ENCODE measurements at regions of chr2 and their contacts with region 1.

Region 1: DNA sequence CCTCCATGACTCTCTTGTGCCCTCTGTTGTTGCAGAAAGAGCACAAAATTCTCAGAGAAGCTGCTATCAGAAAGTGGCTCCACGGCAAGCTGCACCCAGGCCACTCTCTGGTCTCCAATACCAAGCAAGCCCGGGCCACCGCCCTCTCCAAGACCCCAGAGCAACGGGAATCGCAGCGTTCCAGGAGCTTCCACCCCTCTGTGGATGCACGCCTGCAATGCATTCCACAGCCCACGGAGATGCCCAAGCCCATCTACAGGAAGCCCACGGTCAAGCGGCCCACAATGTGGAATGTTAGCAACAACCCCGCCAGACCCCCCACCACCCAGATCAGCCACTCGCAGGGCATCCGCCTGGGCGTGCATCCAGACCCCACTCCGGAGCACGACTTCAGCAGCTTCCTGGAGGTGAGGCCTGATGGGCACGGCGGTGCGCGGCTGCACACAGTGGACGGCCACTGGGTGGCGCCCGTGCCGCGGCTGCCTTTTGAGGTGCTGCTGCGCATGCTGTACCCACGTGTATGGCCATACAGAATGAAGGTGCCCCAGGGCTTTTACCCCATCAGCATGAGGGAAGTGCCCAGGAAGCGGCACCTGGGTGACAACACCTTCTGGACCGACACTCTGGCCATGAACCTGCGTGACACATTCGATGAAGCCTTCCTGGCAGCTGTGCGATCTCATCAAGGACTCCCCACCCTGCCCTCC is 6.3 kb downstream of the ANKRD53 start:
- DNase-seq: peak; percentile 71
- H3K4me3 ChIP-seq: no peak overlapping the region
- H3K27ac ChIP-seq: no peak overlapping the region
- H3K4me1 ChIP-seq: no peaks in the 10 kb centered on the region
- H3K27me3 ChIP-seq: no peaks in the 10 kb centered on the region
- CTCF ChIP-seq: peak; percentile 35
- EP300 ChIP-seq: no peak
- RAD21 ChIP-seq: no peak

Region 2: DNA sequence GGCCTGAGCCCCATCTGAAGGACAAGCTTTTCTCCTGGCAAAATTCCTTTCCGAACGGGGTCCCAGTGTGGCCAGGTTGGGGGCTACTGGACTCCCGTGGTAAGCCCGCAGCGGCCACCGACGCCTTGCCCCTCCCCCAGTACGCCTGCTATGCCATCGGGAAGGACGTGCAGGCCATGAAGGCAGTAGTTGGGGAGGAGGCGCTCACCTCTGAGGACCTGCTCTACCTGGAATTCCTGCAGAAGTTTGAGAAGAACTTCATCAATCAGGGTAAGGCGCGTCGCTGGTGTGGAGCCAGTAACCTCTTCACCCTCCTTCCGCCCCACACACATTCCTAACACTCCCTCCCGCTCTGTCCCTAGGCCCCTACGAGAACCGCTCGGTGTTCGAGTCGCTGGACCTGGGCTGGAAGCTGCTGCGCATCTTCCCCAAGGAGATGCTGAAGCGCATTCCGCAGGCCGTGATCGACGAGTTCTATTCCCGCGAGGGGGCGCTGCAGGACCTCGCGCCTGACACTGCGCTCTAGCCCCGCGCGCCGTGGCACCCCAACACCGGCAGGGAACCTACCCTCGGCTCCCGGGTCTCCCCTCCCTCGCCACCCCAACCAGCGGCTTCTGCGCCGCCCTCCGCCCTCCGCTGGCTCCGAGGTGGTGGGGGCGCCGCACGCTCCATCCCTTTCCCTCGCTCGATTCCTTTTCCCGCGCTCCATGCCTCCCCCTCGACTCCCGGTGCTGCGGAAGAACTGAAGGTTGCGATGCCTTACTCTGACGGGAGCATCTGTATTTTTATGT is 19.9 kb before region 1 on chr2:
- CTCF ChIA-PET with region 1: interaction called, 41 read pairs
- POLR2A ChIA-PET with region 1: no interaction called
- DNase-seq: peak; percentile 84
- H3K4me3 ChIP-seq: peak overlapping the region; percentile 39 to 58
- H3K27ac ChIP-seq: no peak overlapping the region
- H3K4me1 ChIP-seq: no peaks in the 10 kb centered on the region; a peak in 1 of 4 replicates
- H3K27me3 ChIP-seq: no peaks in the 10 kb centered on the region
- CTCF ChIP-seq: peak; percentile 64
- EP300 ChIP-seq: no peak
- RAD21 ChIP-seq: peak; percentile 62

Region 3: DNA sequence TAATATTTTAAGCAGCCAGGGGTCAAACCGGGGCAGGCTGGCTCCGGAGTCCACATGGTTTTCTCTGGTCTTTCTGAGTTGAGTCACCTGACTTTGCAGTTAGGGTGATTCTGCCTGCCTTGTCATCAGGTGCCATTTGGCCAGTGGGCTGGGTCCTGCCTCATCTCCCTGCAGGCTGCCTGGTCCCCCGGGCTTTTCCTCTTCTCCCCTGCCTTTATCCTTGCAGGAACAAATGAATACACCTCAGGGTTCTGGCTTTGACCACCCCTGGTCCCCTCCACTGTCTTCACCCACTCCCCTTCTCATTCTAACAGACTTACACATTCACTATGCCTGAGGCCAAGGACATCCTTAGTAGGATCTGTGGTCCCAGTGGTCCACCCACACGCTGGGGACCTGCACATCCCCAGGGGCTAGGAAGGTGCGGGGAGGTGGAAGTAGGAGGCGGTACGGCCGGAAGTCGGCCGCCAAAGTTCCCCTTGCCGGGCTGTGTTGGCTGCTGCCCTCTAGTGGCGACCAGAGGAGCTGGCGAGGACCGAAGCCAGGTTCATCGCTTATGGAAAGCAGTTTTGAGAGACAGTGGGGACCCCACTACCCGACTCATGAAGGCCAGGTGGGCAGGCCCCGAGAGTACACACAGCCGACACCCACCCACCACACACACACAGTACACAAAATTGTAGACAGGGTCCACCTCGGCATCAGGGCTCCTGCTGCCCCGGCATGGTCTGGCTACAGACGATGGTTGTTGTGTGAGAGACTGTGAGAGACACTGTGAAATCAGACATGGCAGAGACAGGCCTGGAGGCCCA is 16.3 kb after region 1 on chr2:
- CTCF ChIA-PET with region 1: interaction called, 10 read pairs
- POLR2A ChIA-PET with region 1: no interaction called
- DNase-seq: peak; percentile 82
- H3K4me3 ChIP-seq: peak overlapping the region; percentile 26 to 34; a peak in 3 of 4 replicates
- H3K27ac ChIP-seq: no peak overlapping the region
- H3K4me1 ChIP-seq: peaks cover 0 to 3% of the 10 kb centered on the region in 2 experiments; a peak in 1 of 4 replicates
- H3K27me3 ChIP-seq: no peaks in the 10 kb centered on the region; the same call in 1 of the 2 replicates
- CTCF ChIP-seq: peak; percentile 96
- EP300 ChIP-seq: no peak
- RAD21 ChIP-seq: peak; percentile 53

Region 4: DNA sequence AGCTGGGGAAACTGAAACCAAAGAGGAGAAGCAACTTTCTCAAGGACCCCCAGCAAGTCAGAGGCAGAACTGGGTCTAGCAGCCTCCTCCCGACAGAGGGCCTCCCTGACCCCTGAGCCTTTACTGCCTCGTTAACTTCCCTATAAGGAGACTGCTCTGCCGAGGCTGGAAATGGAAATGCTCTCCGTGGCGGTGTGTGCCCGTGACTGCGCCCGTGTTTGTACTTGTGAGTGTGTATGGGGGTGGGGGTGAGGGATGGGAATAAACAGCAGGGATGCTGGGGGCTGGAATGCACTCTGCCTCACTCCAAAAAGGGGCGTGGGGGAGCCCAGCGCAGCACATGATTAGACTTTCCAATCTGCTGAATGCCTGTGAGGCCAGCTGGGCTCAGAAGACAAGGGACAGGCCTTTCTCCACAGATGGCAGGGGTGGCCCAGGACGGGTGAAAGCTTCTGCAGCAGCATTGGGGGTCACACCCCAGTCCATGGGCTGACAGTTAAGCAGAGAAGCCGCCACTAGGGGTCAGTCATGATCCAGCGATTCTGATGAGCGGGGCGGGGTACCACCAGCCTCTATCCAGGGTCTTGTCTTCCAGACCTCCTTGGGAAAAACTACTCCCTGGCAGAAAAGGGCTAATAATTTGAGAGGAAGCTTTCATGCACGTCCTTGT is 172.5 kb after region 1 on chr2:
- CTCF ChIA-PET with region 1: no interaction called
- POLR2A ChIA-PET with region 1: no interaction called
- DNase-seq: peak; percentile 83
- H3K4me3 ChIP-seq: peak overlapping the region in 1 of 2 experiments; percentile 55; a peak in 1 of 4 replicates
- H3K27ac ChIP-seq: no peak overlapping the region
- H3K4me1 ChIP-seq: peaks cover 0 to 9% of the 10 kb centered on the region in 2 experiments; a peak in 1 of 4 replicates
- H3K27me3 ChIP-seq: peaks cover 5% of the 10 kb centered on the region; the same call in 1 of the 2 replicates
- CTCF ChIP-seq: peak; percentile 76
- EP300 ChIP-seq: no peak
- RAD21 ChIP-seq: peak; percentile 78

Region 5: GRCh38 chr2:71173096-71173495 is 188.4 kb after region 1 on chr2:
- CTCF ChIA-PET with region 1: no interaction called
- POLR2A ChIA-PET with region 1: no interaction called
- DNase-seq: no peak
- H3K4me3 ChIP-seq: no peak overlapping the region
- H3K27ac ChIP-seq: no peak overlapping the region
- H3K4me1 ChIP-seq: no peaks in the 10 kb centered on the region
- H3K27me3 ChIP-seq: peaks cover 13% of the 10 kb centered on the region
- CTCF ChIP-seq: no peak
- EP300 ChIP-seq: no peak
- RAD21 ChIP-seq: no peak

Region 6: DNA sequence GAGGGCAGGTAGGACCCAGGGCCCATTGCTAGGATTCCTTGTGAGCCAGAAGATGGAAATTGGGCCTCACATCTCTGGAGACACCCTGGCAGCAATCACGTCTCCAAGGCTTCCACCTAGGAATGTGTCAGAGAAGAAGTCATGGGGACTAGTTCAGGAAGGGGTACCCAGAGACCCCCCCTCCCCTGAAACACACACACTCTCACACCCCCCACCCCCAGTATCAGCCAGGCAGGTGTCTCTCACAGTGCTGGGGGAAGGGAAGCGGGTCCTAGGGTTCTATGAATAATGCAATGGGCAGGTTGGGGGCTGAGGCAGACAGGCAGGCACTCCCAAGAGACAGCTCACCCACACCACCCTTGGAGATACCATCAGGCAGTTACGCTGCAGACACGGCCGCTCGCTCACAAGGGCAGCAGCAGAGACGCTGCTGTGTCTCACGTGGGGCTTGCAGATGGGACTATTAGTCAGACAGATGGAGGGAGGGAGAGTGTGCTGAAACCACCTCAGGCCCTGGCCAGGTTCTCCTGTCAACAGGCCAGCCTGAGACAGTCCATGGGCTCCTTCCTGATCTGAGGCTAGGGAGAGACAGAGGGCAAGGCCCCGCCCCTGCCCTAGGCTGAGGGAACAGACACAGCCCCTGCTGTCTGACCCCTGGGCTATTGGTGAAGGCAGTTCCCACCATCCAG is 1028.3 kb after region 1 on chr2:
- CTCF ChIA-PET with region 1: no interaction called
- POLR2A ChIA-PET with region 1: no interaction called
- DNase-seq: peak; percentile 67
- H3K4me3 ChIP-seq: no peak overlapping the region
- H3K27ac ChIP-seq: no peak overlapping the region
- H3K4me1 ChIP-seq: peaks cover 0 to 6% of the 10 kb centered on the region in 2 experiments; a peak in 1 of 4 replicates
- H3K27me3 ChIP-seq: no peaks in the 10 kb centered on the region
- CTCF ChIP-seq: no peak
- EP300 ChIP-seq: no peak
- RAD21 ChIP-seq: no peak